SK-N-SH (cell line): ENCODE measurements at regions of chr13 and their contacts with region 1.

Region 1: GRCh38 chr13:97298816-97299215 is 76.7 kb downstream of the MBNL2 start:
- DNase-seq: no peak
- H3K4me3 ChIP-seq: no peak overlapping the region
- H3K27ac ChIP-seq: peak overlapping the region; percentile 60 to 99
- H3K4me1 ChIP-seq: peaks cover 37 to 46% of the 10 kb centered on the region in 2 experiments
- H3K27me3 ChIP-seq: no peaks in the 10 kb centered on the region
- CTCF ChIP-seq: no peak
- EP300 ChIP-seq: no peak
- RAD21 ChIP-seq: no peak

Region 2: GRCh38 chr13:97221989-97222700 is 76.7 kb before region 1 on chr13 and contains the start of gene MBNL2:
- CTCF ChIA-PET with region 1: interaction called, 11 read pairs
- POLR2A ChIA-PET with region 1: interaction called, 3 read pairs
- DNase-seq: peak; percentile 80
- H3K4me3 ChIP-seq: peak within 1 kb of the TSS; percentile 75 to 77
- H3K27ac ChIP-seq: peak within 1 kb of the TSS; percentile 95 to 97
- H3K4me1 ChIP-seq: peaks cover 14 to 28% of the 10 kb centered on the region in 2 experiments
- H3K27me3 ChIP-seq: no peaks in the 10 kb centered on the region
- CTCF ChIP-seq: no peak
- EP300 ChIP-seq: no peak
- RAD21 ChIP-seq: no peak
- polyA plus RNA-seq, gene MBNL2: 24.5 and 27.9 TPM in 2 replicates